ENCODE measurements at regions of chr7 and their contacts with region 1.

Region 1: DNA sequence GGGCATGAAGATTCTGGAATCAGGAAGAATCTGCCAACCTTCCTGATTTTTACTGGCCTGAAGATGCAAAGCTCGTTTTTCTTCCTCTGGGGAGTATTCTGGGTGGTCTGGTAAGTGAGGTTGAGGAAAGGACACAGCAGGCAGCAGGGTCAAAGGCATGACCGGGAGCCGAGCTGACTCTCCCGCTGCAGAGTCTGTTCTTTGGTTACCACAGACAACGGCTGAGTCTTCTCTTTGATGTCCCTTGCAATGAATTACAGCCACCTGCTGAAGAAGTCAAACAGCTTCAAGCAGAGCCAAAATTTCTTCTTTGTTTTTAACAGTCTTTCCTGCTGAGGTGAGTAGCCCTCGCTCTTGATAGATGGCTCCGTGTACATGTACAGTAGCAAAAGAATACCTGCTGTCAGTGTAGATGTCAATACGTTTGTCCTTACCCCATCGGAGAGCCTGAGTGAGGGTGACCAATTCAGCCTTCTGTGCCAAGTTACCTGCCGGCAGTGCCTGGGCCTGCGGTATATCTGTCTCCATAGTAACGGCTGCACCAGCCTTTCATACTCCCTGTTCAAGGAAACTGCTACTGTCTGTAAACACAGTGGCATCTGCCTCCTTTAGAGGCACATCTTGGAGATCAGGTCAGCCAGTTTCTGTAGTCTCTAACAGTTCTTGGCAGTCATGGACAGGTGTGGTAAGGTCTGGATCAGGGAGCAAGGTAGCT is 76.4 kb downstream of the PRR15 start:
- DNase-seq: no peak
- H3K4me3 ChIP-seq: no peak overlapping the region
- H3K27ac ChIP-seq: no peak overlapping the region
- H3K4me1 ChIP-seq: peaks cover 0 to 9% (median 5%) of the 10 kb centered on the region in 4 donors
- H3K27me3 ChIP-seq: no peaks in the 10 kb centered on the region
- CTCF ChIP-seq: no peak
- EP300 ChIP-seq: no peak
- POLR2A ChIP-seq: no peak

Region 2: DNA sequence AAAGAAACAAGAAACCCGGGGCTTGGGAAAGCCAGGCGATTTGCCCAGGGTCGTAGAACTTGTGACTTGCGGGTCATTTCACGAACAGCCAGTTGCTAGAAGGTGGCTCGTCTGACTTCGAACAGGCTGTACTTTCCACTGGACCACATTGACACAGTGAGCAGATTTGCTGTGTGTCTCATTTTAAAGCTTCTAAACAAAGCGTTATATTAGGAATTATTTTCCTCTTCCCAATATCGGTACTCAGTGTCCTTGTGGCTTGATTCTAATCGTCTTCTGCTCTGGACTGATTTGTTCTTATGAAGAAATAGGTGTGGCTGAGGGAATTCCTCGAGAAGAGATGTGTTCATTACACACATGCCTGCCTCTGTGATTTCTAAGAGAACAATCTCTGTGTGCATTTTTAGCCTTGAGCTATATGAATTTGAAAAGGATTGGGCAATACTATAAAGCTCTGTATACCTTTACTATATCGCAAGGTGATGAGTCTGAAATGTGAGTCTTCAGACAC is 226.4 kb before region 1 on chr7:
- in situ Hi-C with region 1: no loop called
- intact Hi-C with region 1: no loop called
- DNase-seq: no peak
- H3K4me3 ChIP-seq: no peak overlapping the region
- H3K27ac ChIP-seq: no peak overlapping the region
- H3K4me1 ChIP-seq: peaks cover 0 to 13% (median 5%) of the 10 kb centered on the region in 4 donors
- H3K27me3 ChIP-seq: no peaks in the 10 kb centered on the region
- CTCF ChIP-seq: no peak
- EP300 ChIP-seq: no peak
- POLR2A ChIP-seq: no peak

Region 3: DNA sequence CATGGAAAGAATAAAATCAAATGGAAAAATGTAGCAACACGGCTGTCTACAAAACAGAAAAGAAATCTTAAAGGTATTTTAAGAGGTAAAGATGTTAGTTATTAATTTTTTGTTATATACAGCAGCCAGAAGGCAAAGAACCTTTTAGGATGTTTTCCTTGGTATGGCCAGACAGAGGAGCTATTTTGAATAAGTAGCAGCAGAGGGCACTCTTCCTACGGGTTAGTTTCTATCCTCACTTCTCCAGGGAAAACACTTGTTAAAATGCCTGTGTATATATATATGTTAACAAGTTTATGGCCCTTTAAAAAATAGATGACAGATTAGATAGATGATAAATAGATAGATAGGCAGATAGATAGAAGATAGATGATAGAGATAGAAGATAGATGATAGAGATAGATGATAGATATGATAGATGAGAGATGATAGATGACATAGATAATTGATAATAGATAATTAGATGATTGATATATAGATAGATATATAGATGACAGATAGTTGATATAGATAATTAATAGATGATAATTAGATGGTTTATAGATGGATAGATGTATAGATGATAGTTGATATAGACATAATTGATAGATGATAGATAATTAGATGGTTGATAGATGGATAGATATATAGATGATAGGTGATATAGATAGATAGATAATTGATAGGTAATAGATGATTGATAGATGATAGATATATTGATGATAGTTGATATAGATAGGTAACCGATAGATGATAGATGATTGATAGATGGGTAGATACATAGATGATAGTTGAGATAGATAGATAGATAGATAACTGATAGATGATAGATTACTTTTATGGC is 108.5 kb after region 1 on chr7:
- in situ Hi-C with region 1: loop called in 1 of 4 experiments (anchors 10 kb)
- intact Hi-C with region 1: no loop called
- DNase-seq: no peak
- H3K4me3 ChIP-seq: no peak overlapping the region
- H3K27ac ChIP-seq: no peak overlapping the region
- H3K4me1 ChIP-seq: peaks cover 0 to 7% (median 3%) of the 10 kb centered on the region in 4 donors
- H3K27me3 ChIP-seq: no peaks in the 10 kb centered on the region
- CTCF ChIP-seq: peak; percentile 42 to 46 (median 44)
- EP300 ChIP-seq: no peak
- POLR2A ChIP-seq: no peak

Region 4: GRCh38 chr7:30062591-30062990 is 422.6 kb after region 1 on chr7:
- in situ Hi-C with region 1: loop called in 1 of 4 experiments (anchors 25 kb)
- intact Hi-C with region 1: no loop called
- DNase-seq: no peak
- H3K4me3 ChIP-seq: no peak overlapping the region
- H3K27ac ChIP-seq: no peak overlapping the region
- H3K4me1 ChIP-seq: peaks cover 0 to 5% (median 0%) of the 10 kb centered on the region in 4 donors
- H3K27me3 ChIP-seq: no peaks in the 10 kb centered on the region
- CTCF ChIP-seq: peak in 4 of 5 experiments; percentile 41 to 47 (median 45)
- EP300 ChIP-seq: no peak
- POLR2A ChIP-seq: no peak

Measured in transverse colon (tissue), 4 donors.